Naive thymus-derived CD4-positive, alpha-beta T cell (primary cell): ENCODE measurements at regions of chr4 and their contacts with region 1.

Region 1: GRCh38 chr4:146040623-146041022 is 102.0 kb upstream of the ZNF827 start:
- DNase-seq: no peak
- ATAC-seq: no peak
- H3K4me3 ChIP-seq: no peak overlapping the region
- H3K4me3 Mint-ChIP-seq: no peak overlapping the region
- H3K27ac ChIP-seq: no peak overlapping the region
- H3K27ac Mint-ChIP-seq: no peak overlapping the region
- H3K4me1 ChIP-seq: no peaks in the 10 kb centered on the region
- H3K4me1 Mint-ChIP-seq: no peaks in the 10 kb centered on the region
- H3K27me3 ChIP-seq: no peaks in the 10 kb centered on the region
- H3K27me3 Mint-ChIP-seq: peaks cover 0 to 12% (median 7%) of the 10 kb centered on the region in 5 donors

Region 2: GRCh38 chr4:144480068-144480467 is 1560.6 kb before region 1 on chr4:
- CTCF ChIA-PET with region 1: no interaction called
- POLR2A ChIA-PET with region 1: no interaction called
- intact Hi-C with region 1: no loop called
- DNase-seq: no peak
- ATAC-seq: no peak
- H3K4me3 ChIP-seq: no peak overlapping the region
- H3K4me3 Mint-ChIP-seq: no peak overlapping the region
- H3K27ac ChIP-seq: no peak overlapping the region
- H3K27ac Mint-ChIP-seq: no peak overlapping the region
- H3K4me1 ChIP-seq: no peaks in the 10 kb centered on the region
- H3K4me1 Mint-ChIP-seq: no peaks in the 10 kb centered on the region
- H3K27me3 ChIP-seq: no peaks in the 10 kb centered on the region
- H3K27me3 Mint-ChIP-seq: peaks cover 0 to 8% (median 5%) of the 10 kb centered on the region in 5 donors

Region 3: GRCh38 chr4:145840162-145840768 is 200.4 kb before region 1 on chr4:
- CTCF ChIA-PET with region 1: no interaction called
- POLR2A ChIA-PET with region 1: no interaction called
- intact Hi-C with region 1: loop called in 1 of 2 experiments (anchors 2 kb)
- DNase-seq: peak in 6 of 9 donors; percentile 7 to 34 (median 24)
- ATAC-seq: peak; percentile 89
- H3K4me3 ChIP-seq: no peak overlapping the region
- H3K4me3 Mint-ChIP-seq: no peak overlapping the region
- H3K27ac ChIP-seq: no peak overlapping the region
- H3K27ac Mint-ChIP-seq: peak overlapping the region in 2 of 9 donors; percentile 31 to 42
- H3K4me1 ChIP-seq: peaks cover 3 to 10% of the 10 kb centered on the region in 2 donors
- H3K4me1 Mint-ChIP-seq: peaks cover 15 to 29% (median 27%) of the 10 kb centered on the region in 7 donors
- H3K27me3 ChIP-seq: no peaks in the 10 kb centered on the region
- H3K27me3 Mint-ChIP-seq: no peaks in the 10 kb centered on the region